ENCODE measurements at regions of chr1 and their contacts with region 1.

Region 1: GRCh38 chr1:226062558-226063223 is at the start of gene H3-3A:
- DNase-seq: peak; percentile 99
- ATAC-seq: peak; percentile 87
- H3K4me3 Mint-ChIP-seq: peak within 1 kb of the TSS; percentile 97
- H3K27ac Mint-ChIP-seq: peak within 1 kb of the TSS; percentile 100
- H3K4me1 Mint-ChIP-seq: peaks cover 34% of the 10 kb centered on the region
- H3K27me3 Mint-ChIP-seq: no peaks in the 10 kb centered on the region
- total RNA-seq, gene H3-3A: 176 to 275 TPM

Region 2: GRCh38 chr1:225777583-225778336 is 284.9 kb before region 1 on chr1 and contains the start of gene SRP9:
- CTCF ChIA-PET with region 1: interaction called, 6 read pairs
- POLR2A ChIA-PET with region 1: interaction called, 5 read pairs
- intact Hi-C with region 1: loop called (anchors 1 to 5 kb)
- DNase-seq: peak; percentile 99
- ATAC-seq: peak; percentile 97
- H3K4me3 Mint-ChIP-seq: no peak within 1 kb of the TSS
- H3K27ac Mint-ChIP-seq: no peak within 1 kb of the TSS
- H3K4me1 Mint-ChIP-seq: peaks cover 31% of the 10 kb centered on the region
- H3K27me3 Mint-ChIP-seq: no peaks in the 10 kb centered on the region
- total RNA-seq, gene SRP9: 263 to 308 TPM

Region 3: GRCh38 chr1:225923692-225924555 is 138.8 kb before region 1 on chr1 and contains the start of gene PYCR2:
- CTCF ChIA-PET with region 1: no interaction called
- POLR2A ChIA-PET with region 1: interaction called, 3 read pairs
- intact Hi-C with region 1: loop called in 1 of 2 experiments (anchors 1 kb)
- DNase-seq: peak; percentile 97
- ATAC-seq: peak; percentile 97
- H3K4me3 Mint-ChIP-seq: peak within 1 kb of the TSS; percentile 93
- H3K27ac Mint-ChIP-seq: peak within 1 kb of the TSS; percentile 96
- H3K4me1 Mint-ChIP-seq: peaks cover 54% of the 10 kb centered on the region
- H3K27me3 Mint-ChIP-seq: no peaks in the 10 kb centered on the region
- total RNA-seq, gene PYCR2: 106 to 126 TPM

Region 4: GRCh38 chr1:226083302-226084101 is 20.8 kb after region 1 on chr1:
- CTCF ChIA-PET with region 1: interaction called, 13 read pairs
- POLR2A ChIA-PET with region 1: interaction called, 12 read pairs
- intact Hi-C with region 1: loop called (anchors 1 kb)
- DNase-seq: peak; percentile 94
- ATAC-seq: peak; percentile 92
- H3K4me3 Mint-ChIP-seq: peak overlapping the region; percentile 75
- H3K27ac Mint-ChIP-seq: peak overlapping the region; percentile 65
- H3K4me1 Mint-ChIP-seq: peaks cover 9% of the 10 kb centered on the region
- H3K27me3 Mint-ChIP-seq: no peaks in the 10 kb centered on the region

Region 5: GRCh38 chr1:226186124-226187018 is 123.7 kb after region 1 on chr1 and contains the start of gene ACBD3:
- CTCF ChIA-PET with region 1: no interaction called
- POLR2A ChIA-PET with region 1: interaction called, 5 read pairs
- intact Hi-C with region 1: loop called (anchors 1 to 5 kb)
- DNase-seq: peak; percentile 91
- ATAC-seq: peak; percentile 97
- H3K4me3 Mint-ChIP-seq: peak within 1 kb of the TSS; percentile 91
- H3K27ac Mint-ChIP-seq: peak within 1 kb of the TSS; percentile 92
- H3K4me1 Mint-ChIP-seq: peaks cover 36% of the 10 kb centered on the region
- H3K27me3 Mint-ChIP-seq: no peaks in the 10 kb centered on the region
- total RNA-seq, gene ACBD3: 17.0 to 20.2 TPM

Region 6: GRCh38 chr1:226736908-226737818 is 674.5 kb after region 1 on chr1:
- CTCF ChIA-PET with region 1: no interaction called
- POLR2A ChIA-PET with region 1: no interaction called
- intact Hi-C with region 1: loop called in 1 of 2 experiments (anchors 10 kb)
- DNase-seq: peak; percentile 79
- ATAC-seq: peak; percentile 46
- H3K4me3 Mint-ChIP-seq: peak overlapping the region; percentile 88
- H3K27ac Mint-ChIP-seq: peak overlapping the region; percentile 85
- H3K4me1 Mint-ChIP-seq: peaks cover 42% of the 10 kb centered on the region
- H3K27me3 Mint-ChIP-seq: no peaks in the 10 kb centered on the region